Heart right ventricle (tissue), 16 donors: ENCODE measurements at regions of chr22 and their contacts with region 1.

Region 1: GRCh38 chr22:30116362-30117117 is 36.3 kb downstream of the HORMAD2 start:
- DNase-seq: no peak
- ATAC-seq: no peak
- H3K4me3 ChIP-seq: no peak overlapping the region
- H3K27ac ChIP-seq: peak overlapping the region in 1 of 10 donors; percentile 31
- H3K4me1 ChIP-seq: peaks cover 0 to 8% (median 0%) of the 10 kb centered on the region in 9 donors
- H3K27me3 ChIP-seq: peaks cover 0 to 26% (median 15%) of the 10 kb centered on the region in 7 donors
- CTCF ChIP-seq: no peak

Region 2: GRCh38 chr22:30183861-30184278 is 67.3 kb after region 1 on chr22:
- intact Hi-C with region 1: loop called in 1 of 10 experiments (anchors 10 kb)
- DNase-seq: no peak
- ATAC-seq: no peak
- H3K4me3 ChIP-seq: no peak overlapping the region
- H3K27ac ChIP-seq: no peak overlapping the region
- H3K4me1 ChIP-seq: peaks cover 0 to 26% (median 0%) of the 10 kb centered on the region in 9 donors
- H3K27me3 ChIP-seq: peaks cover 0 to 64% (median 41%) of the 10 kb centered on the region in 7 donors
- CTCF ChIP-seq: no peak